HCT116 (cell line): ENCODE measurements at regions of chr14 and their contacts with region 1.

Region 1: DNA sequence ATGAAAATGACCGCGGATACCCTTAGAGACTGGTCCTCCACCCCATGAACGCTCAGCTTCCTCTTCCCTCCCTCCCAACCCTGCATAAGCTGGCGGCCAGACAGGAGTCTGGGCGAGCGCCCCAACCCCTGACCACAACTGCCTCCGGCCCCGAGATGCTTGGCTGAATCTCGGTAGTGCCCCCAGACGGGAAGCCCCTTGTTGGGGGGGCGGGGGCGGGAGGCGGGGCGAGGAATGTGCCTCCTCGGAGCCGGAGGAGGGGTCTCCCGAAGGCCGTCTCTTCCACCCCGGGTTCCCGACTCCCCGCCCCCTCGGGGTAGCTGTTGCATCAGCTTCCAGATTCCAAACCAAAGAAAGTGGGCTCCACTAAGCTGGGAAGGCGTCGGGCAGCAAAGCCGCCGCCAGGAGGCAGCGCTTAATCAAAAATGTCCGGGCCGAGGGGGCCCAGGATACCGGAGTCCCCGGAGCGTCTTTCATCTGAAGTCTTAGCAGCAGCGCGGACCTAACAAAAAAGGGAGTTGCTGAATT is 7.1 kb upstream of the MRPL52 start:
- DNase-seq: peak; percentile 51
- ATAC-seq: peak; percentile 86
- H3K4me3 ChIP-seq: peak overlapping the region; percentile 29 to 43
- H3K27ac ChIP-seq: no peak overlapping the region
- H3K4me1 ChIP-seq: peaks cover 7 to 35% of the 10 kb centered on the region in 2 experiments
- H3K27me3 ChIP-seq: no peaks in the 10 kb centered on the region
- CTCF ChIP-seq: peak; percentile 81 to 89 (median 87)
- POLR2A ChIP-seq: no peak
- RAD21 ChIP-seq: peak; percentile 88

Region 2: DNA sequence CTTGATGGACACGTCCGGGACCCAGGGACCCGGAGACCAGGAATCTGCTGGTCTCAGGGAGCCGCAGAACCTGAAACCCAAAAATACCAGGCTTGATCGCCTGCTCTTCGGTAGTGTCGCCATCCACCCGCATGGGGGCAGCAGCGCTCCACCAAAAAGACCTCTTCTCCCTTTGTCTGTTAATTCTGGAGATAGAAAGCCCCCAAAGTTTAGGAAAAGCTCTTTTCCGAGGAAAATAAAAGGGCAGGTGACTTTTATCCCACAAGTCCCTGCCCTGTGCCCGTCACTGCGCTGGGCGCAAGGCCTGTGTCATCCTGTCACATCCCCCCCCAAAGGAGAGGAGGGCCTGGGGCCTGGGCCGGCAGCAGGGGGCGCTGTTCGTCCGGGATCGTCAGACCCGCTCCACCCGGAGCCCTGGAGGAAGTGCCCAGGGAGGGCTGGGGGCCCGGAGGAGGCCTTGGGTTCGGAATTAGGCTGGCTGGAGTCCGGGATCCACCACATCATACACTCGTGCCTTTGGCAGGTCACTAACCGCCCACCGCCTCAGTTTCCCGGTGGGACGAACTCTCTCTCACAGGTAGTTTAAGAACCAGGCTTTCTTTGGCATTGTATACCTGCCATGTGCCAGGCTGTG is 265.5 kb before region 1 on chr14:
- CTCF ChIA-PET with region 1: interaction called, 3 read pairs
- POLR2A ChIA-PET with region 1: interaction called, 3 read pairs
- RAD21 ChIA-PET with region 1: no interaction called
- intact Hi-C with region 1: loop called (anchors 2 kb)
- DNase-seq: peak; percentile 48
- ATAC-seq: peak; percentile 92
- H3K4me3 ChIP-seq: 0 out of 4 replicates have a peak overlapping the region, but pooled peaks of 1 of the 2 experiments have one; percentile 23
- H3K27ac ChIP-seq: no peak overlapping the region
- H3K4me1 ChIP-seq: peaks cover 5 to 24% of the 10 kb centered on the region in 2 experiments
- H3K27me3 ChIP-seq: no peaks in the 10 kb centered on the region
- CTCF ChIP-seq: peak; percentile 95 to 100 (median 99)
- POLR2A ChIP-seq: no peak
- RAD21 ChIP-seq: peak; percentile 96

Region 3: GRCh38 chr14:22794551-22794951 is 28.1 kb before region 1 on chr14:
- CTCF ChIA-PET with region 1: no interaction called
- POLR2A ChIA-PET with region 1: no interaction called
- RAD21 ChIA-PET with region 1: no interaction called
- intact Hi-C with region 1: loop called (anchors 1 kb)
- DNase-seq: no peak
- ATAC-seq: no peak
- H3K4me3 ChIP-seq: no peak overlapping the region
- H3K27ac ChIP-seq: no peak overlapping the region
- H3K4me1 ChIP-seq: peaks cover 0 to 10% of the 10 kb centered on the region in 2 experiments; a peak in 2 of 4 replicates
- H3K27me3 ChIP-seq: no peaks in the 10 kb centered on the region
- CTCF ChIP-seq: no peak
- POLR2A ChIP-seq: no peak
- RAD21 ChIP-seq: no peak

Region 4: DNA sequence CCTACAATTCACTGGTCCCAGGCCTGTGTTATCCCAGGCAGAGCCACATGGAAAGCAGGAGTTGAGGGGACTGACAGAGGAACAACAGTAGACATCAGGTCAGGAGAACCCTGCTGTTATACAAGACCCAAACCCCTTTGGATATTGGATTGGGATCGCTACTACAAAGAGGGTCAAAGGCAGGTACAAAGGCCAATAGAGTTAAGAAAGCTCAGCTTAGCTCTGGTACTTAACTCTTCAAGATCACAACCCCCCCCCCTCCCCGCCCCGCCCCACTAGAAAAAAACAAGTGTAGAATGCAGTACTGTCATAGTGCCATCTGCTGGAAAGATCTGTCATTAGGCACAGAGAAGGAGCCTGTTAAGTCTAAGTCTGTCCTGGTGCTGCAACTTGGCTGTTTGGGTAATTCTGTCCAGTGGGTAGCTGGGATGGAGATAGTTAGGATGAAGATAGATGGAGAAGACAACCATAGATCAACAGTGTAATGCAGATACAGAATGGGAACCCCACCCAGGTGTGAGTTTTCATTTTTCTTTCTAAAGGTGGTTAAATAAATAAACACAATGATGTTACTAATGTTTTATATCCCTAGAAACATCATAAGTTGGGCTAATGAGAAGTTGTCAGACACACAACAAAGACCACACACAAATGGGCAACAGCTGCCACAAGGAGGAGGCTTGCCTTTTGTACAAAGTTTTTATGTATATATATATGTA is 77.6 kb after region 1 on chr14:
- CTCF ChIA-PET with region 1: interaction called, 8 read pairs
- POLR2A ChIA-PET with region 1: no interaction called
- RAD21 ChIA-PET with region 1: interaction called in 1 of 2 experiments, 3 read pairs
- intact Hi-C with region 1: loop called (anchors 2 kb)
- DNase-seq: peak; percentile 70
- ATAC-seq: peak; percentile 87
- H3K4me3 ChIP-seq: no peak overlapping the region
- H3K27ac ChIP-seq: 0 out of 2 replicates have a peak overlapping the region, but pooled peaks have one; percentile 17
- H3K4me1 ChIP-seq: peaks cover 0 to 22% of the 10 kb centered on the region in 2 experiments; a peak in 2 of 4 replicates
- H3K27me3 ChIP-seq: no peaks in the 10 kb centered on the region
- CTCF ChIP-seq: peak; percentile 62 to 76 (median 67); a peak in 5 of 6 replicates
- POLR2A ChIP-seq: no peak
- RAD21 ChIP-seq: peak; percentile 68

Region 5: GRCh38 chr14:22973217-22974032 is 150.8 kb after region 1 on chr14:
- CTCF ChIA-PET with region 1: no interaction called
- POLR2A ChIA-PET with region 1: no interaction called
- RAD21 ChIA-PET with region 1: no interaction called
- intact Hi-C with region 1: no loop called
- DNase-seq: no peak
- ATAC-seq: peak; percentile 64
- H3K4me3 ChIP-seq: no peak overlapping the region
- H3K27ac ChIP-seq: no peak overlapping the region
- H3K4me1 ChIP-seq: peaks cover 36 to 39% of the 10 kb centered on the region in 2 experiments
- H3K27me3 ChIP-seq: no peaks in the 10 kb centered on the region
- CTCF ChIP-seq: peak in 2 of 3 experiments; percentile 61 to 75; a peak in 4 of 6 replicates
- POLR2A ChIP-seq: no peak
- RAD21 ChIP-seq: no peak